ENCODE measurements at regions of chr7 and their contacts with region 1.

Region 1: DNA sequence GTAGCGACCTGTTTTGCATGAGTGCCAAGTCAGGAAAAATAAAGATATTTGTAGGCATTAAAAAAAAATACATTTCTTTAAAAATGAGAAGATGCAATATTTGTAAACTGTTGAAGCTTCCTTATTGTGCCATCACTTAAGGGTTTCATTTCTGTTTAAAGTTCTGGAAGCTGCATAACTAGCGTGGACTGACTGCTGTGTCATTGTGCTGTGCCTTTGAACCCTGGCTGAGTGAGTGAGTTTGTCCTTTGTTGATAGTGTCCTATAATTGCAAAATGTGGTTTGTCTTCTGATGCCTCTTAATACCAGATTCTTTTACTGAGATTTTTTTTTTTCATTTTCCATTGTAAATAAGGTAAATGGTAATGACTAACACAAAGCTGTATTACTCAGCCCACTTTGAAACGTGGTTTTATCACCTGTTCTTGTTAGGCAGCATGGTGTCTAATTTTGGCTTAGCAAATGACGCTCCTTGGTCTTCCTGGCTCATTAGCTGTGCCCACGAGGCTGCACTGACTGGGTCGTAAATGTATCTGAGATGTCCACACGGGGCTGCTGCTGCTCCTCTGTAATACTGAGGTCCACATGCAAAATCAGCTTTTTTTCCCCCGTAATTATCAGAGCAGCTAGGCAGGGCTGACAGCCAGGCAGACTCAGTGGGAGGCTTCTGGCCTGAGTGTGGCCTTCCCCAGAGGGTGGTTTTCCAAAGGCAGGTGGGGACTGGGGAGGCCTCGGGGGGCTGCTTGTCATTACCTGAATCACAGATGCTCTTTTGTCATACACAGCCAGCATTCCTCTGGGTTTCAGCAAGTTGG is 14.8 kb downstream of the ZSCAN25 start:
- DNase-seq: peak; percentile 87
- ATAC-seq: peak; percentile 97
- H3K4me3 Mint-ChIP-seq: peak overlapping the region; percentile 41
- H3K27ac Mint-ChIP-seq: peak overlapping the region; percentile 96
- H3K4me1 Mint-ChIP-seq: peaks cover 72% of the 10 kb centered on the region
- H3K27me3 Mint-ChIP-seq: no peaks in the 10 kb centered on the region
- CTCF ChIP-seq: peak; percentile 54

Region 2: DNA sequence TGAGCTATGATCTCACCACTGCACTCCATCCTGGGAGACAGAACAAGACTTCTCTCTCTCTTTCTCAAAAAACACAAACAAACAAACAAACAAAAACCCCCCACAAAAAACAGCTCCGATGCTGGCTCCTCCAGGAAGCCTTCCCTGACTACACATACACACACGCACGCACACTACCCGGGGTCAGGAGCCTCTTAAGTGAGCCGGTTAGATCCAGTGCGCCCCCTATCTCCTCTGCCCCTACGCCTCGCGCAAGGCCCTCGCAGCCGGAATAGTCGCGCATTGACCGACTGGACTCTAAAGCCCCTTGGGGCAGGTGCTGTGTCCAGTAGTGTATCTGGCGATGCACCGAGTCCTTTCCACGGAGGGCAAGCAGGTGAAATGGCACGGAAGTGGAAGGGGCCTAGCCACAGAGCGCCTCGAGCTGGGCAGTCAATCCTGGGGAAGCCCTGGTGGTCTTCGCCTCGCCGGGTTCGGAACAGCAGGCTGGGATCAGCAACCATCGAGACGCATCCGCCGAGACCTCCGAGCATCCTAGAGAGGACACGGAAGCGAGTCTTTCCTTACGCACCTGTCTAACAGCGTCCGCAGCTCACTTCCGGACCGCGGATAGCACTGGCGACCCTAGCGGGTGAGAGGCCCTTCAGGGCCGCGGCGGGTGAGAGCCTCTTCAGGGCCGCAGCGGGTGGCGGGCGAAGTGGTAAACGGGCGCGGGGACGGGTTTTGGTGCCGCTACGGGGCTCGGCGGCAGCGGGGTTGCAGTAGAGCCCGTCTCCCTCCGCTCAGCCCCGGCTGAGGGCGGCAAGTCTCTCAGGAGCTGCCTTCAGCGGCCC is 14.9 kb before region 1 on chr7 and contains the start of gene ZSCAN25:
- CTCF ChIA-PET with region 1: interaction called, 12 read pairs
- POLR2A ChIA-PET with region 1: interaction called, 23 read pairs
- intact Hi-C with region 1: no loop called
- DNase-seq: peak; percentile 93
- ATAC-seq: peak; percentile 93
- H3K4me3 Mint-ChIP-seq: peak within 1 kb of the TSS; percentile 94
- H3K27ac Mint-ChIP-seq: peak within 1 kb of the TSS; percentile 98
- H3K4me1 Mint-ChIP-seq: peaks cover 48% of the 10 kb centered on the region
- H3K27me3 Mint-ChIP-seq: no peaks in the 10 kb centered on the region
- CTCF ChIP-seq: no peak
- total RNA-seq, gene ZSCAN25: 31.8 to 35.8 TPM

Region 3: DNA sequence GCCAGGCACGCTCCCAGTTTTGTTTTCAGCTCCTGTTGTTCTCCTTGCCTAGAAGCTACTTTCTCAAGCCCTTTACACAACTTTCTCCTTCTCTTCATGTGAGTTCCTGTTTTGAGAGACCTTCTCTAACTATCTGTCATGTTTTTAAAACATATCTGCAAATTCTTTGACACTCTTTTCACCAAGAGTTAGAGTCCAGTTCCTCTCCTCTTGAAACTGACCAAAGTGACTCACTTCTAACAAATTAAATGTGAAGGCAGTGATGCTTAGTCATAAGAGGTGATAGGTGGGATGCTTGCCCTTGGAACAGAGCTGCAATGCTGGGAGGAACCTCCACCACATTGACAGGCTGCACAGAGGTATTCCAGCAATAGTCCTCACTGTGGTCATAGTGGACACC is 10.5 kb after region 1 on chr7:
- CTCF ChIA-PET with region 1: interaction called, 11 read pairs
- POLR2A ChIA-PET with region 1: interaction called, 10 read pairs
- intact Hi-C with region 1: no loop called
- DNase-seq: no peak
- ATAC-seq: peak; percentile 40
- H3K4me3 Mint-ChIP-seq: no peak overlapping the region
- H3K27ac Mint-ChIP-seq: peak overlapping the region; percentile 66
- H3K4me1 Mint-ChIP-seq: peaks cover 62% of the 10 kb centered on the region
- H3K27me3 Mint-ChIP-seq: no peaks in the 10 kb centered on the region
- CTCF ChIP-seq: no peak

Region 4: DNA sequence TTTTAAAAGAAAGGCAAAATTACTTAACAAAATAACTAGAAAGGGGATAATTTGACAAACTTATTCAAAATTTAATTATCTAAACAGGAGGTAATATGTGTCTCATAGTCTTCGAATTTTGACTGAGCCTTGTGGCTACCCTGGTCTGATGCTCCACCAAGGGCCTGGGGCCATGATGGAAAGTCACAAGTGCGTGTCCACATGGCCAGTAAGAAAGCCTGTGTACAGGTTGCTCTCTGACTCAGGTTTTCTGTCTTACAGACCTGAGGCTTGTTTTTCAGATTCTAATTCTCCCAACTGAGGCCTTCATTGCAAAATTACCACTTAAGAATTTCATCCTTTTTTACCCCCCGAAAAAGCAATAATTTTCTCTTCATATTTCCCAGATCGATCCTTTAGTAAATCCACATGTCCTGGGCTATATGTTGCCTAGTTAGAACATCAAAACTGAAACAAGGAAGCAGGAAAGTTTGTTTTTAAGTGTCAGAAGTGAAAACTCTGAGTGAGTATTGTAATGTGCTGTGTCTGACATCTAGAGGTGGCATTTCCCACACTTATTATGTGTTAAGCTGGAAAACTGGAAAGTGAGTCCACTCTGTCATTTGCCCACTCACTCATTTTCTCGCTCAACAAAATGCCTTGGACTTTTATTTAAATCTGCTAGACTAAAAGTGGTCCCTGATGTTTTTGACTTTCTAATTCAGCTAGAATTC is 206.3 kb after region 1 on chr7:
- CTCF ChIA-PET with region 1: interaction called, 6 read pairs
- POLR2A ChIA-PET with region 1: no interaction called
- intact Hi-C with region 1: loop called (anchors 10 kb)
- DNase-seq: peak; percentile 9
- ATAC-seq: peak; percentile 51
- H3K4me3 Mint-ChIP-seq: no peak overlapping the region
- H3K27ac Mint-ChIP-seq: peak overlapping the region; percentile 26
- H3K4me1 Mint-ChIP-seq: peaks cover 17% of the 10 kb centered on the region
- H3K27me3 Mint-ChIP-seq: no peaks in the 10 kb centered on the region
- CTCF ChIP-seq: peak; percentile 29